Right ventricle myocardium inferior (tissue), 1 donor: ENCODE measurements at regions of chr16 and their contacts with region 1.

Region 1: GRCh38 chr16:20900299-20901067 is at the starts of genes DCUN1D3 and LYRM1:
- DNase-seq: peak; percentile 98
- ATAC-seq: peak; percentile 94
- total RNA-seq, gene DCUN1D3: 15.8 TPM
- total RNA-seq, gene LYRM1: 58.1 TPM

Region 2: GRCh38 chr16:20866145-20866772 is 34.2 kb before region 1 on chr16:
- intact Hi-C with region 1: loop called (anchors 5 kb)
- DNase-seq: peak; percentile 69
- ATAC-seq: no peak

Region 3: DNA sequence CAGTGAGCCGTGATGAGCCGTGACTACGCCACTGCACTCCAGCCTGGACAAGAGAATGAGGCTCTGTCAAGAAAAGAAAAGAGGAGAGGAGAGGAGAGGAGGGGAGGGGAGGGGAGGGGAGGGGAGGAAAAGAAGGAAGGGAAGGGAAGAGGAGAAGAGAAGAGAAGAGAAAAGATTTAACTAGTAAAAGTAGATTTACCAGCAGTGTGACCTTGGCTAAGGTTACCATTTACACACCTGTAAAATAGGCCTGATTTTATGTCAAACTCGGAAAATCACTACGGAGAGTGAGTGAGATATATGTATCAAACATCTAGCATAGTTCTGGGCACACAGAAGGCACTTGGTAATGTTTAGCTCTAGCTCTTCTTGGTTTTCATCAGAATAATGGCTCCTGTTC is 109.3 kb after region 1 on chr16:
- intact Hi-C with region 1: no loop called
- DNase-seq: no peak
- ATAC-seq: no peak